Lower leg skin (tissue), 4 donors: ENCODE measurements at regions of chr2 and their contacts with region 1.

Region 1: GRCh38 chr2:207473049-207473930 is 56.5 kb upstream of the CREB1 start:
- DNase-seq: peak in 1 of 2 donors; percentile 36
- H3K4me3 ChIP-seq: no peak overlapping the region
- CTCF ChIP-seq: no peak
- POLR2A ChIP-seq: no peak

Region 2: DNA sequence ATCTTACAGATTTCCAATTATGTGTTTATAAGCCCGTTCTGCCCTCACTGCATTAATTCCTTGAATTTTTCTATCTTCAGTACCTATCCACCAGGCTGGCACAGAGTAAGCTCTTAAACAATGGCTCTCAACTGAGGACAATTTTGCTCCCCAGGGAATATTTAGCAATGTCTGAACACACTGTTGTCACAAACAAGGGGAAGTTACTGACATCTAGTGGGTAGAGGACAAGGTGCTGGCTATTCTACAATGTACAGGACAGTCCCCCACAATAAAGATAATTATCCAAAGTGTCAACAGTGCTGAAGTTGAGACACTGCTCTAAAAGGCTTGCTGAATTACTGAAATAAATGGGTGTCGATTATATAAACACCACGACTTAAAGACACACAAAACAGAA is 1319.1 kb before region 1 on chr2:
- intact Hi-C with region 1: no loop called
- DNase-seq: no peak
- H3K4me3 ChIP-seq: no peak overlapping the region
- CTCF ChIP-seq: no peak
- POLR2A ChIP-seq: no peak

Region 3: DNA sequence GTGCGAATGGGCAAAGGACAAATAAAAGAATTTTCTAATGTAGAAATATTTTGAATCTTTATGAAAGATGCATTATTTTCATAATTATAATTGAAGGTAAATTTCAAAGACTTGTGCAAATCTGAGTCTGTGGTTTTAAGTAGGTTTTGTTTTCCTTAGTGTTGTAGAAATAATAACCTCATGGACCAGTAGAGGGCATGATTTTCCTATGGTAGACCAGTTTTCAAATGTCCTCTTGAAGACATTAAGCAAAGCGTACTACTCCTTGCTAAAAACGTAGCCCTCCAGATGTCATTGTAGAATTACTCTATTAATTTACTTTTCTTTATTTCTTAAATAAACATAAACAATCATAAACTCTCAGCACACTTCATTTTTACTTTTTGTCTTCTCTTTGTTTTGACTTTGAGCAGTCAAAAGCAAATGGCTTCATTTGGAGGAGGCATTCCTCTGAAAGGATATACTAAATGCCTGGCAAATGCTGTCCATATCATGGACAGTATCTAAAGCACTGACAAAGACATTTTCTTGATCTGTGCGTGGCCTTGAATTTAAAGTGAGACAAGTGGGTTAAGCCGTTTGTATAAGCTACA is 916.8 kb before region 1 on chr2:
- intact Hi-C with region 1: loop called (anchors 10 kb)
- DNase-seq: no peak
- H3K4me3 ChIP-seq: no peak overlapping the region
- CTCF ChIP-seq: no peak
- POLR2A ChIP-seq: no peak

Region 4: GRCh38 chr2:206693399-206694137 is 779.7 kb before region 1 on chr2:
- intact Hi-C with region 1: loop called (anchors 5 kb)
- DNase-seq: peak in 1 of 2 donors; percentile 39
- H3K4me3 ChIP-seq: no peak overlapping the region
- CTCF ChIP-seq: no peak
- POLR2A ChIP-seq: no peak

Region 5: DNA sequence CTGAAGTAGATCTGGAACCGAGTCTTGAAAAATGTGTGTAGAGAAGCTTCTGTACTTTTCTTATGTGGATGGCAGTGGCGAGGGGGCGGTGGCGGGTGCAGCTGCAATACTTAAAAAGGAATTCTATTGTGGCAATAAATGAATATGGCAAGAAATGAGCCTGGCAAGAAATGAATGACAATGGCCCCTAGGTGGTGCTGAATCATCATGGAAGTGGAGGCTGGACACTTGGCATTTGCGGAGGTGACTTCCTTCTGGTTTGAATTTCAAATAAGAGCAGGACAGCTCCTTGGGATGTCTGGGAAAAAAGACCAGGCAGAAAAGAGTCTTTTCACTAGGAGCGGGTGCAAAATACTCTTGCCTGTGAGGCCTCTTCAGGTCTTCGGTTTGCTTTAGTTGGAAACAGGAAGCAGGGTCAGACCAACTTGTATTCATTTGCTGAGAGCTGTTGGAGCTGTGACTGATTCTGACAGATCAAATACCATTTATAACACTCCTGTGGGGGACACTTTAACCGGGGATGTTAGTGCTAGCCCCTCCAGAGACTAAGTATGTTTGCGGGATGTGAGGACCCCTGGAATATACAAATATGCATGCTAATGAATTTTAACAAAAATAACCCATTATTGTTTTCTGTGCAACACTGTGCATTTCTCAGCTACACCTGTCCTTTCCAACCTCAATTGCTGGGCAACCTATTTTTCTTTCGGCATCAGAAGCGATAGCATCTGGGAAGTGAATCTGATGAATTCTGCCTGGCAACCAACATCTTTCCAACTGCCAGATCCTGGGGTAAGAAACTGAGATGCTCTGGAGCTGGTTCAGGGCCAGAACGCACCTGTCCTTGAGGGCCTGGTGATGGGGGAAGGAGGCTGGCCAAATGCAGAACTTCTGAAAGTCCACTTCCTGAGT is 672.5 kb before region 1 on chr2:
- intact Hi-C with region 1: loop called (anchors 5 kb)
- DNase-seq: peak; percentile 64 to 87
- H3K4me3 ChIP-seq: no peak overlapping the region
- CTCF ChIP-seq: peak in 1 of 3 donors; percentile 10
- POLR2A ChIP-seq: no peak

Region 6: DNA sequence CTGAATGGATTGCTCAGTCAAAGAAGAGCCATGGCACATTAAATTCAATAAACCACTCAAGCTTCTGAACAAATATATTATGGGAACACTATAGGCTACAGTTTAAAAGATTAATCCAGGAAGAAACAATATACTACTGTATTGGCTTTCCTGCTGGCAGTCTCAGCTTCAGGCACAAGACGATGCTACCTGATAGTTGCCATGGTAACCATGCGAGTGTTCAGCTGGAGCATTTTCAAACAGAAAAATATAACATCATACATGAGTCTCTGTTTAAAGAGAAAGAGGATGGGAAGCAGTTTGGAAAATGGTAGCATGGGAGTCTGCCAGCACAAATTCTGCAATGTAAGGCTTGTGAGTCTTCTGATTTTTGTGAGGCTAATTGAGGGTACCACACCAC is 599.9 kb before region 1 on chr2:
- intact Hi-C with region 1: no loop called
- DNase-seq: no peak
- H3K4me3 ChIP-seq: no peak overlapping the region
- CTCF ChIP-seq: no peak
- POLR2A ChIP-seq: no peak

Region 7: DNA sequence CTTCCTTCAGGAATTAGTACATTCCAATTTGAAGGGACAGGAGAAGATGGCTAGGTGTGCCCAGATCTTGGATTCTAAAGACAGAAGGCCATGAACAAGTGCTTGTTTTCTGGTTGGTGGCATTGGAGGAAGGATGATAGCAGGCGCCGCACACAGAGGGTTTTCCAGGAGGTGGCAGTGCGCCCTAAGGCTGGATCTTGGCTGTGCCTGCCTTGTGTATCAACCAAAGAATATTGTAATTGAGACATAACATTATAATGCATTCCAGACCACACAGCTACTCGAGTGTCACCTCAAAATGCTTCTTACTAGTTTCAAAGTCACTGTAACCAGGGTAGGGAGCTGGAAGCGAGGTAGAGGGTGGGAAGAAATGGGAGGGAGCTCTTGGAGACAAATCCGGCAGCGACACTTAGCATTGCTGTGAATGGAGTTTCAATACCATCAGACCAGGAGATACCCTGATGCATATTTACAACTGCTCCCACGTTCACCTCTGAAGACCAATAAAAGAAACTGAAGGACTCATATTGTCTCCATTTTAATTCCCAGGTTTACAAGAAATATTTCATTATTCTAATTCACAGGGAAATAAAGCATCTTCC is 491.4 kb before region 1 on chr2:
- intact Hi-C with region 1: loop called (anchors 2 kb)
- DNase-seq: peak; percentile 76 to 94
- H3K4me3 ChIP-seq: no peak overlapping the region
- CTCF ChIP-seq: no peak
- POLR2A ChIP-seq: no peak

Region 8: GRCh38 chr2:206993996-206994463 is 479.3 kb before region 1 on chr2:
- intact Hi-C with region 1: no loop called
- DNase-seq: no peak
- H3K4me3 ChIP-seq: no peak overlapping the region
- CTCF ChIP-seq: no peak
- POLR2A ChIP-seq: no peak

Region 9: DNA sequence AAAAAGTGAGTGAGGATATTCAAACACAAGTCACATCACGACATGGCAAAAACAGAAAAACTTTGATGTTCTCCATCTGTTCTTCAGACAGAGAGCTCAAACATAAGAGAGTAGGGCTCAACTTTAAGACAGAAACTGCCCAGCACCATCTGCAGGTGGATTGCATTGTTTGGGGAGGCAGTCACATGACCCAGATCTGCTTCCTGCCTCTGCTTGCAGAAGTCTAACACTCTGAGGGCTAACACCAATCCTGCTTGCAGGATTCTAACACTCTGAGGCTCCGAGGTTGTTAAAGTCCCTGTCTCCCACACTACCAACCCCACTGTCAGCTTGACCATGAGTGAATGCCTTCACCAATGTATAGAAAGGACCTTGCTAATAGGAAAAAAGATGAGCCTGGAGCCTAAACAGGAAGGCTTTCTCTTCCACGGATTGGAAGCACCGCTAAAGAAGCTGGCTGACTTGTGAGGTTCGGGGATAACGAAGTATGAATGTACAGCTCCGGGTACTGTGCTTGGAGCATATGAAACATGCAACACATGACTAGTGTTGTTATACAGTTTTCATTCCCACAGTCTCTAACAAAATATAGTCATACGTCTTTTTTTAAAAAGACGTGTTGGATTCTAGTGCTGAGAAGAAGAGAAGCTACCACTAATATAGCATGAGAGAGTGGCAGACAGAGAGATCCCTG is 120.2 kb before region 1 on chr2:
- intact Hi-C with region 1: no loop called
- DNase-seq: no peak
- H3K4me3 ChIP-seq: no peak overlapping the region
- CTCF ChIP-seq: no peak
- POLR2A ChIP-seq: no peak